Vagina (tissue), 2 donors: ENCODE measurements at regions of chr6 and their contacts with region 1.

Region 1: DNA sequence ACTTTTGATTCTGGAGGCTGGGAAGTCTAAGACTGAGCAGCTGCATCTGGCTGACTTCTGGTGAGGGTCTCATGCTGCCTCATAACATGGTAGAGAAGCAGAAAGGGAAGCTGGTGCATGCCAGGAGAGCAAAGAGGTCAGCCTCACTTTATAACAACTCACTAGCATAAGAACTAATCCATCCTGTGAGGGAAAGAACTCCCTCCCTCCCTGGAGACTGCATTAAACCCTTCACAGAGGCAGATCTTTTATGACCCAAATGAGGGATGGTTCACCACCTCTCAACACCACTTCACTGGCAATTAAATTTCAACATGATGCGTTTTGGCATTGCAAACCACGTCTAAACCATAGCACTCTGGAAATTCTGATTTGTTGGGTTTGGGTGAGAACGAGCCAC is 33.9 kb downstream of the STXBP5 start:
- DNase-seq: no peak
- H3K4me3 ChIP-seq: no peak overlapping the region
- H3K27ac ChIP-seq: no peak overlapping the region
- H3K4me1 ChIP-seq: no peaks in the 10 kb centered on the region
- H3K27me3 ChIP-seq: no peaks in the 10 kb centered on the region
- CTCF ChIP-seq: no peak
- POLR2A ChIP-seq: no peak

Region 2: DNA sequence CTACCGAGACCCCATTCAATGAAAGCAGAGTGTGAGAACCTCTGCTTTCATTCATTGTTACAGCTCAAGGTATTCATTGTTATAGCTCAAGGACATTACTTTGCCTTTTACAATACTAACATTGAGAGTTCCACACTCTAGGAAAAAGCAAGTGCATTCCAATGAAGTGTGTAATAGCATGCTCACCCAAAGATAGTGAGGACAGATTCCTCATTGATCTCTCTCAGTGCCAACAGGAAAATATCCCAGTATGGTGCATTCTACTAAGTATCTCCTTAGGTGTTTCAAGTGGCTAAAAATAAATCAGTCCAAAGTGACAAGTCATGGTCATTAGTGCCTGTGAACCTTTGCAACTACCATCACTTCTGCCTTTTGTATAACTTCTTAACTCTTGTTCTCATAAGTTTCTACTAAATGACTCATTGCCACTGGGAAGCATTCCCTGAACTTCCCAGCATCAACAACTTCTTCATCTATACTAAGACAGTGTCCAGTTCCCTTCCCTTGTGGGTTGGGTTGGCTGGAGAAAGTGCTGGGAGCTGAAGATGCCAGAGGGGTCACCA is 174.6 kb before region 1 on chr6:
- intact Hi-C with region 1: no loop called
- DNase-seq: no peak
- H3K4me3 ChIP-seq: no peak overlapping the region
- H3K27ac ChIP-seq: no peak overlapping the region
- H3K4me1 ChIP-seq: no peaks in the 10 kb centered on the region
- H3K27me3 ChIP-seq: no peaks in the 10 kb centered on the region
- CTCF ChIP-seq: no peak
- POLR2A ChIP-seq: no peak

Region 3: GRCh38 chr6:147081140-147081539 is 157.0 kb before region 1 on chr6:
- intact Hi-C with region 1: loop called (anchors 10 kb)
- DNase-seq: no peak
- H3K4me3 ChIP-seq: no peak overlapping the region
- H3K27ac ChIP-seq: no peak overlapping the region
- H3K4me1 ChIP-seq: no peaks in the 10 kb centered on the region
- H3K27me3 ChIP-seq: no peaks in the 10 kb centered on the region
- CTCF ChIP-seq: no peak
- POLR2A ChIP-seq: no peak

Region 4: GRCh38 chr6:147268254-147268653 is 30.1 kb after region 1 on chr6:
- intact Hi-C with region 1: no loop called
- DNase-seq: no peak
- H3K4me3 ChIP-seq: no peak overlapping the region
- H3K27ac ChIP-seq: no peak overlapping the region
- H3K4me1 ChIP-seq: no peaks in the 10 kb centered on the region
- H3K27me3 ChIP-seq: no peaks in the 10 kb centered on the region
- CTCF ChIP-seq: no peak
- POLR2A ChIP-seq: no peak

Region 5: DNA sequence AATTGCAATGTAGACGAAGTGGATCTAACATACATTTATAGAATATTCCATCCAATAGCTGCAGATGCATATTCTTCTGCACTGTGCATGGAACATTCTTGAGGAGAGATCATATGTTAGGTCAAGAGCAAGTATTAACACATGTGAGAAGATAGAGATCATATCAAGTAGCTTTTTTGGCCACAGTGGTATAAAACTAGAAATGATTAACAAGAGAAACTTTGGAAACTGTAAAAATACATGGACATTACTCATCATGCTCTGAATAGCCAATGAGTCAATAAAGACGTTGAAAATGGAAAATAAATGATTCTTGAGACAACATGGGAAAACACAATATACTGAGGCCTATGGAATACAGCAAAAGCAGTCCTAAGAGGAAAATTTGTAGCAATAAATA is 60.3 kb after region 1 on chr6:
- intact Hi-C with region 1: loop called (anchors 2 kb)
- DNase-seq: no peak
- H3K4me3 ChIP-seq: no peak overlapping the region
- H3K27ac ChIP-seq: no peak overlapping the region
- H3K4me1 ChIP-seq: no peaks in the 10 kb centered on the region
- H3K27me3 ChIP-seq: no peaks in the 10 kb centered on the region
- CTCF ChIP-seq: no peak
- POLR2A ChIP-seq: no peak